T-cell (primary cell): ENCODE measurements at regions of chr16 and their contacts with region 1.

Region 1: GRCh38 chr16:31052124-31052523 is 18.8 kb downstream of the STX4 start:
- DNase-seq: no peak
- ATAC-seq: no peak
- H3K4me3 ChIP-seq: no peak overlapping the region
- H3K4me3 Mint-ChIP-seq: no peak overlapping the region
- H3K27ac ChIP-seq: no peak overlapping the region
- H3K27ac Mint-ChIP-seq: no peak overlapping the region
- H3K4me1 ChIP-seq: no peaks in the 10 kb centered on the region
- H3K4me1 Mint-ChIP-seq: peaks cover 0 to 2% (median 0%) of the 10 kb centered on the region in 3 donors
- H3K27me3 ChIP-seq: no peaks in the 10 kb centered on the region
- H3K27me3 Mint-ChIP-seq: no peaks in the 10 kb centered on the region

Region 2: DNA sequence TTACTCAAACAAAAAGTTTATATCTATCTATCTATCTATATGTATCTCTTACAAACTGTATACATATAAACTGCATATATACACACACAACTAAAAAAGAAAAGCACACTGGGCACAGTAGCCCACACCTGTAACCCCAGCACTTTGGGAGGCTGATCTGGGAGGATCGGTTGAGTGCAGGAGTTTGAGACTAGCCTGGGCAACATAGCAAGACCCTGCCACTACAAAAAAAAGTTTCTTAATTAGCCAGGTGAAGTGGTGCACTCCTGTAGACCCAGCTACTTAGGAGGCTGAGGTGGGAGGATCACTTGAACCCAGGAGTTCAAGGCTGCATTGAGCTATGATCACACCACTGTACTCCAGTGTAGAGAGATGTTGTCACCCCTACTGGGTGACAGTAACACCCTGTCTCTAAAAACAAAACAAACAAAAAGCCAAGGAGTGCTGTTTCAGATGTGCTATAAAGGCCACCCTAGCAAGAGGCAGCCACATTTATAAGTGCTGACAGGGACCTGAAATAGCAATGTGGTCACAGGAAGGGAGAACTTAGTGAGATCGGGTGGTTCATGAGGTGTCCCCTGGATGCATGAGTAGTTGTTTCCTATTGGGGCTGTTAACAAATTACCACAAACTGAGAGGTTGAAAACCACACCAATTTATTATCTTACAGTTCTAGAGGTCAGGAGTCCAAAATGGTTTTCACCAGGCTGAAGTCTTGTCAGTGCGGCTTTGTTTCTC is 701.8 kb before region 1 on chr16:
- CTCF ChIA-PET with region 1: no interaction called
- POLR2A ChIA-PET with region 1: interaction called in 1 of 2 experiments, 11 read pairs
- DNase-seq: peak in 1 of 35 experiments; percentile 52
- ATAC-seq: no peak
- H3K4me3 ChIP-seq: no peak overlapping the region
- H3K4me3 Mint-ChIP-seq: peak overlapping the region in 1 of 3 donors; percentile 10
- H3K27ac ChIP-seq: peak overlapping the region; percentile 33
- H3K27ac Mint-ChIP-seq: peak overlapping the region; percentile 59 to 72
- H3K4me1 ChIP-seq: peaks cover 0 to 54% of the 10 kb centered on the region in 2 experiments
- H3K4me1 Mint-ChIP-seq: peaks cover 18 to 42% (median 24%) of the 10 kb centered on the region in 3 donors
- H3K27me3 ChIP-seq: no peaks in the 10 kb centered on the region
- H3K27me3 Mint-ChIP-seq: no peaks in the 10 kb centered on the region

Region 3: DNA sequence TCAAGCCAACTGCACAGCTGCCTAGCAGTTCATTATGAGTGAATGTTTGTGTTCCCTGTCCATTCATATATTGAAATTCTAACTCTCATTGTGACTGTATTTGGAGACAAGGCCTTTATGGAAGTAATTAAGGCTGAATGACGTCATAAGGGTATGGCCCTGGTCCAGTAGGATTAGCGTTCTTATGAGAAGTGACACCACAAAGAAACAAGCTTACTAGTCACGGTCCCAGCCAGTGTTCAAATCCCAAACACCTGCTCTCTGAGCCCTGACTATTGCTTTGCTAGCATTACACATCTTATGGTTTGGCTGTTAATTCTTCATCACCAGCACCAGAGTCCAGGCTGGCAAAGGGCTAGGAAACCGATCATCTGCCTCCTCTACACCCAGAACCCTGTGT is 19.7 kb after region 1 on chr16:
- CTCF ChIA-PET with region 1: no interaction called
- POLR2A ChIA-PET with region 1: no interaction called
- DNase-seq: no peak
- ATAC-seq: no peak
- H3K4me3 ChIP-seq: peak overlapping the region in 1 of 2 donors; percentile 95
- H3K4me3 Mint-ChIP-seq: peak overlapping the region; percentile 92 to 94 (median 94)
- H3K27ac ChIP-seq: peak overlapping the region; percentile 58
- H3K27ac Mint-ChIP-seq: peak overlapping the region; percentile 93 to 94
- H3K4me1 ChIP-seq: peaks cover 14 to 27% of the 10 kb centered on the region in 2 experiments
- H3K4me1 Mint-ChIP-seq: peaks cover 37 to 47% (median 42%) of the 10 kb centered on the region in 3 donors
- H3K27me3 ChIP-seq: no peaks in the 10 kb centered on the region
- H3K27me3 Mint-ChIP-seq: no peaks in the 10 kb centered on the region

Region 4: GRCh38 chr16:31292704-31293103 is 240.6 kb after region 1 on chr16:
- CTCF ChIA-PET with region 1: no interaction called
- POLR2A ChIA-PET with region 1: interaction called in 1 of 2 experiments, 11 read pairs
- DNase-seq: no peak
- ATAC-seq: no peak
- H3K4me3 ChIP-seq: no peak overlapping the region
- H3K4me3 Mint-ChIP-seq: no peak overlapping the region
- H3K27ac ChIP-seq: no peak overlapping the region
- H3K27ac Mint-ChIP-seq: peak overlapping the region in 1 of 2 donors; percentile 12
- H3K4me1 ChIP-seq: no peaks in the 10 kb centered on the region
- H3K4me1 Mint-ChIP-seq: no peaks in the 10 kb centered on the region
- H3K27me3 ChIP-seq: peaks cover 0 to 4% of the 10 kb centered on the region in 2 experiments
- H3K27me3 Mint-ChIP-seq: peaks cover 4 to 13% of the 10 kb centered on the region in 2 donors